Ascending aorta (tissue), 2 donors: ENCODE measurements at regions of chr19 and their contacts with region 1.

Region 1: DNA sequence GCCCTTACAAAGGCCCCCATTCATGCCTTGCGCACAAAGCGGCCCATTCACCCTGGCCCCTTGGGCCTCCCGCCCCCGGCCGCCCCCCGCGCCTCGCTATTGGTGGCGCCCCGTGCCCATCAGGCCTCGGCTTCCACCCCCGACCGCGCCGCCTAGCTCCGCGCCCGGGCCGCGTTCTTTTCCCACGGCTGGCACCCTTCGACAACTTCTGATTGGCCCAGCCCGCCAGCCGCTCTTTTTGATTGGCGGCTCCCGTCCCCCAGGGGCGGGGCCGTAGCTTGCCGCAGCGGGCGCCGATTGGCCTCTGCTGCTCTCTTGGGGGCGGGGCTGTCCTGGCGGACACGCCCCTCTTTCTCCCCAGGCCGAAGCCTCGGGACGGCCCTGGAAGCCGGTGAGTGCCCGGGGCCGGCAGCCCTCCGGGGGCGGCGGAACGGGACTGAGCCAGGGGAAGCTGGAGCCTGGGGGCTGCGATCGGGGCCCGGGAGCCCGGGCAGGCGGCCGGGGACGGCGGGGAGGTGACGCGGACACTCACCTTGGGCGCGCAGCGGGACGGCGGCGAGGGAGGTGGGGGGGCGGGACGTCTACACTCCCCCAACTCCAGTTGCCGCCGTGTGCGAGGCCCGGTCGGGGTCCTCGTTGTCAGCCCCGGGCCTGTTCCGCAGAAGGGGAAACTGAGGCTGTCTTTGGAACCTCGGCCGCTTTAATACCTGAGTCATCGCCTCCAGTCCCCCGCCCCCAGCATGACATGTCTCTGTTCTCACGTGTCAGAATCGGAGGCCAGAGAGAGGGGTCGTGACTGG is at the start of gene MYH14:
- DNase-seq: peak; percentile 61 to 93
- H3K4me3 ChIP-seq: peak within 1 kb of the TSS; percentile 57 to 78
- H3K27ac ChIP-seq: no peak within 1 kb of the TSS
- H3K4me1 ChIP-seq: peaks cover 0 to 21% of the 10 kb centered on the region in 2 donors
- H3K27me3 ChIP-seq: no peaks in the 10 kb centered on the region
- CTCF ChIP-seq: peak in 1 of 3 experiments; percentile 10
- total RNA-seq, gene MYH14: 8.6 TPM

Region 2: GRCh38 chr19:50147462-50148423 is 55.7 kb before region 1 on chr19:
- intact Hi-C with region 1: loop called (anchors 1 kb)
- DNase-seq: peak; percentile 61 to 93
- H3K4me3 ChIP-seq: peak overlapping the region; percentile 71 to 79
- H3K27ac ChIP-seq: peak overlapping the region; percentile 62 to 84
- H3K4me1 ChIP-seq: no peaks in the 10 kb centered on the region
- H3K27me3 ChIP-seq: no peaks in the 10 kb centered on the region
- CTCF ChIP-seq: peak in 2 of 3 experiments; percentile 42 to 65

Region 3: DNA sequence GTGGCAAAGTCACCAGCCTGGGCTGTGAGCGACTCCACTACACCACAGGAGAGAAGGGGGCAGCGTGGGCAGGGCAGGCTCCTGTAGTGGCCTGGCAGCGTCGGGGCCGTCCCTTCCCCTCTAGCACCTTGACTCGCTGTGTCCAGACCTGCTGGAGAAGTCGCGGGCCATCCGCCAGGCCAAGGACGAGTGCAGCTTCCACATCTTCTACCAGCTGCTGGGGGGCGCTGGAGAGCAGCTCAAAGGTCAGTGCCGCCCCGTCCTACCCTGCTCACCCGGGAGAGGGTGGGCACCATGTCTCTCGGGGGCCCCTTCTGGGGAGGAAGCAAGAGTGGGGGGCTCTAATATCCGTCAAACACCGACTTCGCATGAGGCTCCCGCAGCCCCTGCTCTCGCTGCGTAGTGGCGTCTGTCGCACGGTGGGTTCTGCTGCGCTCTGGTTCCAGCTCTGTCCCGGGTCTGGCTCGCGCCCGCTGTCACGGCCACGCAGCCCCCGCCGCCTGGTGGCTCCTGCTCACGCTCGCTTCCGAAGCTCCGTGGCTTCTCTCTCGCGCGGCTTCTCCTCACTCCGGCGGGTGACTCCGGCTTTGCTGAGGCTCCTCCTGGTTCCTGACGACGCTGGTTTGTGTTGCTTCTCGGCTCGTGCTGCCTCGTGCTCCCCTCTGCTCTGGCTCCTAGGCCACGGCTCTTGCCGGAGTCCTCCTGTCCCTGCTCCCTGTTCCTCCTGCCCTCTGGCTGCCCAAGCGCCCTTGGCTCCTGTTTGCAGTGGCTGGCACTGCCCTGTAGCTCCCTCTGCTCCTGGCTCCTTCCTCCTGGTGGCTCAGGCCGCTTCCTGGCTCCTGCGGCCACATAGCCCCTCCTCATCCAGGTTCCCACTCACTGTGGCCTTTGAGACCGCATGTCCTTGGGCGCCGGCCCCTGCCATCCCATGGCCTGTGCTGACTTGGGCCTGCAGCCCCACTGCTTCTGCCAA is 27.2 kb after region 1 on chr19:
- intact Hi-C with region 1: loop called (anchors 2 kb)
- DNase-seq: no peak
- H3K4me3 ChIP-seq: no peak overlapping the region
- H3K27ac ChIP-seq: no peak overlapping the region
- H3K4me1 ChIP-seq: peaks cover 0 to 5% of the 10 kb centered on the region in 2 donors
- H3K27me3 ChIP-seq: no peaks in the 10 kb centered on the region
- CTCF ChIP-seq: no peak

Region 4: GRCh38 chr19:50418176-50419021 is 214.9 kb after region 1 on chr19 and contains the start of gene SPIB:
- intact Hi-C with region 1: no loop called
- DNase-seq: no peak
- H3K4me3 ChIP-seq: no peak within 1 kb of the TSS
- H3K27ac ChIP-seq: no peak within 1 kb of the TSS
- H3K4me1 ChIP-seq: peaks cover 3 to 6% of the 10 kb centered on the region in 2 donors
- H3K27me3 ChIP-seq: peaks cover 7% of the 10 kb centered on the region
- CTCF ChIP-seq: no peak
- total RNA-seq, gene SPIB: not detected

Region 5: DNA sequence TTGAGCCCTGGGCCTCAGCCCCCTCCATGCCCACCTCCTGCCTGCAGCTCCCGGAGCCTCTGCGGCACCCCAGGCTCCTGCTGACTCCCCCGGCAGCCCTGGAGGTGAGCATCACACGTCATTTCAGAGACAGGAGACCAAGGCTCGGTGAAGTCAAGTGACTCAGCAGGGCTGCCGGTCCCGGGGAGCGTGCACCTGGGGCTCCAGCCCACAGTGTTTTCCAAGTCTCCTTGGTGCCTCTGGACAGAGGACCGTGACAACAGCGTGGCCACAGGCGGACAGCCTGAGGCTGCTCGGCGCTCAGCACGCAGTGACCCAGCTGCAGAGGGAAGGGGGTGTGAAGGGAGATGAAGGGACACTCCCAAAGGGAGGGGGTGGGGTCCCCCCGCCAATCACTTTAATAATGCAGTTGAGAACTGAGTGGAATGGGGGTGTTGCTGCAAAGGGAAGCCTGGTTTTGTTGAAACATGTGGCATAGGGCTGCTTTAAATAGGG is 327.7 kb after region 1 on chr19:
- intact Hi-C with region 1: no loop called
- DNase-seq: no peak
- H3K4me3 ChIP-seq: no peak overlapping the region
- H3K27ac ChIP-seq: no peak overlapping the region
- H3K4me1 ChIP-seq: no peaks in the 10 kb centered on the region
- H3K27me3 ChIP-seq: no peaks in the 10 kb centered on the region
- CTCF ChIP-seq: no peak

Region 6: GRCh38 chr19:51296336-51297093 is 1093.0 kb after region 1 on chr19:
- intact Hi-C with region 1: no loop called
- DNase-seq: no peak
- H3K4me3 ChIP-seq: no peak overlapping the region
- H3K27ac ChIP-seq: no peak overlapping the region
- H3K4me1 ChIP-seq: no peaks in the 10 kb centered on the region
- H3K27me3 ChIP-seq: no peaks in the 10 kb centered on the region
- CTCF ChIP-seq: no peak